Tibial artery (tissue), 4 donors: ENCODE measurements at regions of chr2 and their contacts with region 1.

Region 1: DNA sequence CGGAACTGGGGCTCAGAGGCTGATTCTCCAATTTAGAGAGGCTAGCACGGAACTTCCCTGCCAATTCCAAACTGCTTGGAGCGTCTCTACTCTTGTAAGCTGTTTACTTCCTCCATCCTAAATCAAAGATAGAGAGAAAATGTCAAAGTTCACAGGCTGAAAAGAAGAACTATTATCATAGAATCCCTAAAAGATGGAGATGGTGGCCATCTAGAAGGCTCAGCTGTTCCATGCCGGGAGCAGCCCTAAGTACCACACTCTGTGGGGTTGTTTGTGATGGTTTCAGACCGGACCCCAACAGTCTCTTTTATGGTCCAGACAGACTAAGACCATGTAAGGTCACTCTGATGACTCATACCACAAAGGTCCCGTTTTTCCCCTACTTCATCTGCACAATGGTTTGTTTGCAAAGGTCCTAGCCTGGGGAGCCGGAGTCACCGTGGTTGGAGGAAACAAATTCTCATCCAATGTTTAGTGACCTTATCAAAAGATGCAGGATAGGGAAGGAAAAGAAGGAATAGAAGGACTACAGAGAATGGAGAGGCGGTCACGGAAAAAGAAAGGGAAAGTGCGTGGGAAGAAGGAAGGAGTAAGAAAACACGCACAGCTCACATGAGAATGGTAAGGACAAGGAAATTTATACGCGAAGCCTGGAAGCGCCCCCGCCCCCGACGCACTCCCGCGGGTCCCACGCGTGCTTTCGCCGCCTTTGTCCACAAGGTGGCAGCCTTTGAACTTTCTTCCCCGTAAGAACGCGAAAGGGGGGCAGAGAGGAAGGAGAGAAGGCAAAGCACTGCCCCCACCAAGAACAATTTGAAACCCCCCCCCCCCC is 453 bp upstream of the ANTXR1 start:
- DNase-seq: peak; percentile 70 to 86
- H3K4me3 ChIP-seq: peak overlapping the region; percentile 78 to 90
- H3K27ac ChIP-seq: peak overlapping the region; percentile 82 to 91
- H3K4me1 ChIP-seq: peaks cover 0 to 34% (median 16%) of the 10 kb centered on the region in 4 donors
- H3K27me3 ChIP-seq: no peaks in the 10 kb centered on the region
- CTCF ChIP-seq: peak; percentile 75 to 87

Region 2: DNA sequence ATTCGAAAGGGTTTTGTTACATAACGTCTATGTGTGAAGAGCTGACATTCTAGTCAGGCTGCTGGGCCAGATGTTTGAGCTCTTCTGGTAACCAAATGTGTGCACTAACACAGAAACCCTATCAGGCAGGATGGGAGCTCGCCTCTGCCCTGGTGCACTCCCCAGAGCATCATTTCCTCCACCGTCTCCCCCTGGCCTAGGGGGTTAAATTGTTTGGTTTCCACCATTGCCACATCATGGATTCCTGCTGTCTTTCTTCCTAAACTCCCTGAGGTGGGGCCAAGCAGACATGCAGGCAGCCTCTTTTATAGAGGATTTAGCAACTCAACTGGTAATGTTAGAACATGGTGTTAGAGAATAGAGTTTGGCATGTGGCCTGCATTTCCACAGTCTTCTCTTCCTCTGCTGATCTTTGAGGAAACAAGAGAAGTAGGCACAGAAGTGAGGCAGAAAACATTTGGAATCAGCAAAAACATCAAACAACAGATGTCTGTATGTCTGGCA is 87.7 kb after region 1 on chr2:
- intact Hi-C with region 1: loop called (anchors 10 kb)
- DNase-seq: peak in 1 of 2 donors; percentile 67
- H3K4me3 ChIP-seq: no peak overlapping the region
- H3K27ac ChIP-seq: peak overlapping the region in 1 of 2 donors; percentile 34
- H3K4me1 ChIP-seq: peaks cover 0 to 29% (median 12%) of the 10 kb centered on the region in 4 donors
- H3K27me3 ChIP-seq: no peaks in the 10 kb centered on the region
- CTCF ChIP-seq: no peak

Region 3: GRCh38 chr2:69306822-69307578 is 294.5 kb after region 1 on chr2:
- intact Hi-C with region 1: loop called (anchors 2 kb)
- DNase-seq: peak; percentile 90 to 92
- H3K4me3 ChIP-seq: peak overlapping the region; percentile 59 to 70
- H3K27ac ChIP-seq: peak overlapping the region; percentile 88 to 92
- H3K4me1 ChIP-seq: peaks cover 0 to 62% (median 52%) of the 10 kb centered on the region in 4 donors
- H3K27me3 ChIP-seq: no peaks in the 10 kb centered on the region
- CTCF ChIP-seq: peak; percentile 86 to 93

Region 4: GRCh38 chr2:69509007-69509749 is 496.7 kb after region 1 on chr2:
- intact Hi-C with region 1: loop called (anchors 5 kb)
- DNase-seq: no peak
- H3K4me3 ChIP-seq: no peak overlapping the region
- H3K27ac ChIP-seq: no peak overlapping the region
- H3K4me1 ChIP-seq: peaks cover 0 to 2% (median under 1%) of the 10 kb centered on the region in 4 donors
- H3K27me3 ChIP-seq: no peaks in the 10 kb centered on the region
- CTCF ChIP-seq: no peak